PC-9 (cell line): ENCODE measurements at regions of chr12 and their contacts with region 1.

Region 1: DNA sequence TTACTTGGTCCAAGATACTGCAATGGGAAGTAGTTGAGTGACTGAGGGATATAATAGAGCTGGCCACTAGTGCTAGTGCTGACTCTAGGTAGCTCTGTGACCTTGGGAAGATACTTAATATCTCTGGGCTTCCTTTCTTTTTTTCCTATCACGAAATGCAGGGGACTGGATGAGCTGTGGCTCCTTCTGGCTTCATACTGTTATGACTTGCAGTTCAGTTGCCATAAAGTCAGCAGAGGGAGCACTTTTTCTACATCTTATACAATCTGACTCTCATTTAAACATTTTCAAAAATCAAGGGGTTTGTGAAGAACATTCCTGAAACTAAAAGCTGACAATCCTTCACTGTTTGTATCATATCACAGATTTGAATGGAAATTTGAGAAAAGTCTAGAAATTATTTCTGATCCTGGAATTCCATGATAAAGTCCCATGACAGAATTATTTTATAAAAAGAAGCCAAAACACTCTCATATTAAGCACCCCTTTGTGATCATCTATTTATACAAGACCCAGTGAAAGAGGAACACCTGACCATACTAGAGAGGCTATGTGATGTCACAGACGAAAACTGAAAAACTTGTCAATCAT is 5.4 kb downstream of the BHLHE41 start:
- DNase-seq: peak in 1 of 2 experiments; percentile 52
- H3K4me3 ChIP-seq: peak overlapping the region; percentile 87; the same call in 1 of the 2 replicates
- H3K27ac ChIP-seq: peak overlapping the region; percentile 97
- H3K4me1 ChIP-seq: peaks cover 61% of the 10 kb centered on the region
- H3K27me3 ChIP-seq: no peaks in the 10 kb centered on the region
- CTCF ChIP-seq: peak; percentile 71

Region 2: GRCh38 chr12:25629341-25629740 is 490.1 kb before region 1 on chr12:
- CTCF ChIA-PET with region 1: interaction called, 13 read pairs
- POLR2A ChIA-PET with region 1: no interaction called
- intact Hi-C with region 1: no loop called
- DNase-seq: no peak
- H3K4me3 ChIP-seq: no peak overlapping the region
- H3K27ac ChIP-seq: no peak overlapping the region
- H3K4me1 ChIP-seq: no peaks in the 10 kb centered on the region
- H3K27me3 ChIP-seq: no peaks in the 10 kb centered on the region
- CTCF ChIP-seq: no peak

Region 3: GRCh38 chr12:26580619-26581018 is 461.1 kb after region 1 on chr12:
- CTCF ChIA-PET with region 1: interaction called, 18 read pairs
- POLR2A ChIA-PET with region 1: no interaction called
- intact Hi-C with region 1: no loop called
- DNase-seq: no peak
- H3K4me3 ChIP-seq: no peak overlapping the region
- H3K27ac ChIP-seq: no peak overlapping the region
- H3K4me1 ChIP-seq: no peaks in the 10 kb centered on the region
- H3K27me3 ChIP-seq: no peaks in the 10 kb centered on the region
- CTCF ChIP-seq: no peak

Region 4: GRCh38 chr12:26651566-26652188 is 532.2 kb after region 1 on chr12:
- CTCF ChIA-PET with region 1: interaction called, 7 read pairs
- POLR2A ChIA-PET with region 1: no interaction called
- intact Hi-C with region 1: loop called (anchors 1 kb)
- DNase-seq: peak; percentile 67 to 77
- H3K4me3 ChIP-seq: no peak overlapping the region
- H3K27ac ChIP-seq: no peak overlapping the region
- H3K4me1 ChIP-seq: peaks cover 12% of the 10 kb centered on the region; the same call in 1 of the 2 replicates
- H3K27me3 ChIP-seq: no peaks in the 10 kb centered on the region
- CTCF ChIP-seq: peak; percentile 97

Region 5: GRCh38 chr12:26701604-26702215 is 582.2 kb after region 1 on chr12:
- CTCF ChIA-PET with region 1: interaction called, 10 read pairs
- POLR2A ChIA-PET with region 1: no interaction called
- intact Hi-C with region 1: loop called (anchors 5 kb)
- DNase-seq: peak in 1 of 2 experiments; percentile 40
- H3K4me3 ChIP-seq: no peak overlapping the region
- H3K27ac ChIP-seq: no peak overlapping the region
- H3K4me1 ChIP-seq: peaks cover 7% of the 10 kb centered on the region; the same call in 1 of the 2 replicates
- H3K27me3 ChIP-seq: no peaks in the 10 kb centered on the region
- CTCF ChIP-seq: peak; percentile 78

Region 6: DNA sequence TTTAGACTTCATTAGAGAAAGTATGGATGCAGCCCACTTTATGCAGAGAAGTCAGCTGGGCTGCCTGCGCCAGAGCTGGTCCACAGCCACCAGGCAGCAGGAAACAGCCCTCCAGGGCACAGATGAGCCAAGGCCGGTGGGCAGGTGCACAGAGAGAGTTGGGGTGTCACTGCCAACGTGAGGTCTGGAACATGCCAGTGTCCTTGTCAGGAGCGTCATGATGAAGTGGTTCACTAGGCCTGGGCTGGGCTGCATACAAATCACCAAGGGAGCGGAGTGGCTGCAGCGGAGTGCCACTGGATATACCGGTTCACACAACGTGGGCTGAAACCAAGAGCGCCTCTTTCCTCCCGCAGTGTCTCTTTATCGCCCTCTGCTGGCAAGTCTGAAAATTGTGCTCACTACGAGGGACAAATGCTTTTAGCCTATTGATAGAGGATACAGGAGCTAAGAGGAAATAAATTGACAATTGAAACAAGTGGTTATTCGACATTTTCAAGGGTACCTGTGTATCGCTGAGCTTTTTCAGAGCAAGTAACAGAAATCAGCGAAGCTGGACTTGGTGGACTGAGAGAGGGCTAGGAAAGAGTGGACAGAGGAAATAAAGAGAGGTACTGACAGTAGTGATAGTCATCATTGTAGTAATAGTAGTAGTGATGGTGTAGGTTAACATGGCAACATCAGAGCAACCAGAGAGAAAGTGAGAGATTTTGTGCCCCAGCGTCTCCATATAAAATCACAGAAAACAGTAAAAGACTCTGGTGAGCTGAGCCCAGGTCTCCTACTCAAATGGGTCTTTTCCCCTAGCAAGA is 765.5 kb after region 1 on chr12:
- CTCF ChIA-PET with region 1: no interaction called
- POLR2A ChIA-PET with region 1: no interaction called
- intact Hi-C with region 1: loop called (anchors 5 kb)
- DNase-seq: peak; percentile 81 to 90
- H3K4me3 ChIP-seq: no peak overlapping the region
- H3K27ac ChIP-seq: no peak overlapping the region
- H3K4me1 ChIP-seq: no peaks in the 10 kb centered on the region
- H3K27me3 ChIP-seq: no peaks in the 10 kb centered on the region
- CTCF ChIP-seq: peak; percentile 95